ENCODE measurements at regions of chr5 and their contacts with region 1.

Region 1: GRCh38 chr5:42089705-42090104 is 164.6 kb downstream of the FBXO4 start:
- DNase-seq: no peak
- H3K4me3 ChIP-seq: no peak overlapping the region
- H3K27ac ChIP-seq: no peak overlapping the region
- H3K4me1 ChIP-seq: no peaks in the 10 kb centered on the region
- H3K27me3 ChIP-seq: no peaks in the 10 kb centered on the region
- CTCF ChIP-seq: no peak

Region 2: DNA sequence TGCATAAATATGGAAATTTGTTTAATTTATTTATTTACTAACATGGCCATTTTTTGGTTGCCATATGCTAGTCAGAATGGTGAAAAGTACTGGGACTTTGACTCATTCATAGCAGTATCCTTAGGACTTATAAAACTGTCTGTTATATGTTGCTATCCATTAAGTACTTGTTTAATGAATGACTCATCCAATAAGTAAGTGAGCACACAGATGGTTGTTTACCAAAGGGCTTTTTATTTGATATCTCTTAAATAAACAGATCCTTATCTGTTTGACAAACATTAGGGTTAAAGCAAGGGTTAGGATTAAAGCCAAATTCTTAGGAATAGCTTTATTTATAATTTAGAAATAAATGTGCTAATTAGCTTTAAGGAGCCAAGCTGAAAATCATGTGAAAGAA is 18.8 kb after region 1 on chr5:
- CTCF ChIA-PET with region 1: no interaction called
- POLR2A ChIA-PET with region 1: no interaction called
- intact Hi-C with region 1: no loop called
- DNase-seq: peak in 1 of 2 experiments; percentile 86
- H3K4me3 ChIP-seq: no peak overlapping the region
- H3K27ac ChIP-seq: no peak overlapping the region
- H3K4me1 ChIP-seq: no peaks in the 10 kb centered on the region
- H3K27me3 ChIP-seq: peaks cover 17% of the 10 kb centered on the region; the same call in 1 of the 2 replicates
- CTCF ChIP-seq: no peak

Region 3: GRCh38 chr5:42216904-42217303 is 127.2 kb after region 1 on chr5:
- CTCF ChIA-PET with region 1: no interaction called
- POLR2A ChIA-PET with region 1: no interaction called
- intact Hi-C with region 1: no loop called
- DNase-seq: no peak
- H3K4me3 ChIP-seq: no peak overlapping the region
- H3K27ac ChIP-seq: no peak overlapping the region
- H3K4me1 ChIP-seq: no peaks in the 10 kb centered on the region
- H3K27me3 ChIP-seq: no peaks in the 10 kb centered on the region
- CTCF ChIP-seq: no peak

Region 4: DNA sequence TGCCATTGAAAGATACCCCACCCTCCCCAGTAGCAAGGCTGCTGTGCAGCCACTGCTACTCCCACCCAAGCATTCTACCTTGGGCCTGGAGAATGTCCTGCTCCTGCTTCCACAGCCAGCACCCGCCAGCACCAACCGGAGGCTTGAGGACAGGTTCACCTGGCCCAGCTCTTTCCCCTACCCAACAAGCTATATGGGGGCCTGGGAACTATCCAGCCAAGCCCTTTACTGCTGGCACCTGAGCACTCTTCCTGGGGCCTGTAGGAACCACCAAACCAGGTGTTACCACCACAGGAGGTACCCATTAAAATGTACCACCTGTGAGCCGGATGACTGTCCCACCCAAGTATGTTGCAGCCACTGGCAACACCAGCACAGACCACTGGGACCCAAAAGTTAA is 247.4 kb after region 1 on chr5:
- CTCF ChIA-PET with region 1: no interaction called
- POLR2A ChIA-PET with region 1: no interaction called
- intact Hi-C with region 1: loop called (anchors 10 kb)
- DNase-seq: no peak
- H3K4me3 ChIP-seq: no peak overlapping the region
- H3K27ac ChIP-seq: no peak overlapping the region
- H3K4me1 ChIP-seq: no peaks in the 10 kb centered on the region
- H3K27me3 ChIP-seq: no peaks in the 10 kb centered on the region
- CTCF ChIP-seq: no peak